Left ventricle myocardium inferior (tissue), 1 donor: ENCODE measurements at regions of chr21 and their contacts with region 1.

Region 1: DNA sequence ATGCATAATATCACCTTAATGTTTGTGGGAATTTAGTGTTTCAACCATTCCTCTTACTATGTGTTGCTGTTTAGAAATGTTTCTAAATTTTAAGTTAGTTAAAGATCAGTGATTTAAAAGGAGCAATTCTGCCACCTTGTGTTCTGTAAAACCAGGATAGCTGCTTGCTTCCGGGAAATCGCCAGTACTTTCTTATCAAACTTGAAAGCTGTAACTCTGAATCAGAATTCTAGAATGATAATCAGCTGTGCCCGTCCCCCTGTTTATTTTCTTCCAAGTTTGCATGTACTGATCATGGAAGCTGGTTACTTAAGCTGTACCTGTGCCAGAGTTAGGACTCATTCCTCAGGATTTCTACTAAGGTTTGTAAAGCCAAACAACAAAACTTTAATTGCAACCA is 656.4 kb downstream of the LTN1 start:
- DNase-seq: no peak
- H3K4me3 ChIP-seq: no peak overlapping the region
- H3K27ac ChIP-seq: peak overlapping the region; percentile 2
- H3K4me1 ChIP-seq: peaks cover 40% of the 10 kb centered on the region
- H3K27me3 ChIP-seq: no peaks in the 10 kb centered on the region
- CTCF ChIP-seq: peak; percentile 69

Region 2: GRCh38 chr21:28069450-28069923 is 266.8 kb before region 1 on chr21:
- intact Hi-C with region 1: loop called (anchors 10 kb)
- DNase-seq: no peak
- H3K4me3 ChIP-seq: no peak overlapping the region
- H3K27ac ChIP-seq: no peak overlapping the region
- H3K4me1 ChIP-seq: peaks cover 26% of the 10 kb centered on the region
- H3K27me3 ChIP-seq: no peaks in the 10 kb centered on the region
- CTCF ChIP-seq: no peak

Region 3: DNA sequence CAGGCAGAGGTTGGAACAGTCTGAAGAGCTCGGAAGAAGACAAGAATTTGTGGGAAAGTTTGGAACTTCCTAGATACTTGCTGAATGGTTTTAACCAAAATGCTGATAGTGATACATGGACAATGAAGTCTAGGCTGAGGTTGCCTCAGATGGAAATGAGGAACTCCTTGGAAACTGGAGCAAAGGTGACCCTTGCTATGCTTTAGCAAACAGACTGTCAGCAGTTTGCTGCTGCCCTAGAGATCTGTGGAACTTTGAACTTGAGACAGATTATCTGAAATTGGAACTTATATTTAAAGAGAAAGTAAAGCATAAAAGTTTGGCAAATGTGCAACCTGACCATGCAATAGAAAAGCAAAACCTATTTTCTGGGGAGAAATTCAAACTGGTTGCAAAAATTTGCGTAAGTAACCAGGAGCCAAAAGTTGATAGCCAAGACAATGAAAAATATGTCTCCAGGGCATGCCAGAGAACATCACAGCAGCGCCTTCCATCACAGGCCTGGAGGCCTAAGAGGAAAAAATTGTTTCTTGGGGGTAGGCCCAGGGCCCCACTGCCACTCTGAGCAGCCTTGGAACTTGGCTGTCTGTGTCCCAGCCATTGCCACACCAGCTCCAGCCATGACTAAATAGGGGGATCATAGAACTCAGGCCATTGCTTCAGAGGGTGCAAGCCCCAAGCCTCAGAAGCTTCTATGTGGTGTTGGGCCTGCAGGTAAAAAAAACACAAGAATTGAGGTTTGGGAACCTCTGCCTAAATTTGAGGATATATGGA is 18.9 kb before region 1 on chr21:
- intact Hi-C with region 1: no loop called
- DNase-seq: no peak
- H3K4me3 ChIP-seq: no peak overlapping the region
- H3K27ac ChIP-seq: no peak overlapping the region
- H3K4me1 ChIP-seq: no peaks in the 10 kb centered on the region
- H3K27me3 ChIP-seq: no peaks in the 10 kb centered on the region
- CTCF ChIP-seq: no peak